ENCODE measurements at regions of chr17 and their contacts with region 1.

Region 1: GRCh38 chr17:14926526-14927122 is 338.5 kb downstream of the PMP22 start:
- DNase-seq: peak; percentile 66
- ATAC-seq: no peak
- H3K4me3 Mint-ChIP-seq: no peak overlapping the region
- H3K27ac Mint-ChIP-seq: no peak overlapping the region
- H3K4me1 Mint-ChIP-seq: no peaks in the 10 kb centered on the region
- H3K27me3 Mint-ChIP-seq: no peaks in the 10 kb centered on the region

Region 2: GRCh38 chr17:14737984-14738659 is 188.5 kb before region 1 on chr17:
- CTCF ChIA-PET with region 1: no interaction called
- POLR2A ChIA-PET with region 1: no interaction called
- DNase-seq: no peak
- ATAC-seq: no peak
- H3K4me3 Mint-ChIP-seq: no peak overlapping the region
- H3K27ac Mint-ChIP-seq: no peak overlapping the region
- H3K4me1 Mint-ChIP-seq: no peaks in the 10 kb centered on the region
- H3K27me3 Mint-ChIP-seq: no peaks in the 10 kb centered on the region

Region 3: GRCh38 chr17:14940108-14940945 is 13.7 kb after region 1 on chr17:
- CTCF ChIA-PET with region 1: interaction called, 23 read pairs
- POLR2A ChIA-PET with region 1: no interaction called
- DNase-seq: no peak
- ATAC-seq: no peak
- H3K4me3 Mint-ChIP-seq: no peak overlapping the region
- H3K27ac Mint-ChIP-seq: no peak overlapping the region
- H3K4me1 Mint-ChIP-seq: no peaks in the 10 kb centered on the region
- H3K27me3 Mint-ChIP-seq: no peaks in the 10 kb centered on the region

Measured in activated CD8-positive, alpha-beta T cell treated with anti-CD3 and anti-CD28 coated beads, Interleukin-2, amount 10 ng/mL, durations not matched to agents 7 days and 5 days (primary cell).